ENCODE measurements at regions of chr10 and their contacts with region 1.

Region 1: GRCh38 chr10:58268870-58269605 is at the start of gene CISD1:
- DNase-seq: peak; percentile 96 to 99 (median 97)
- H3K4me3 ChIP-seq: peak within 1 kb of the TSS; percentile 44 to 83 (median 62)
- H3K4me3 Mint-ChIP-seq: peak within 1 kb of the TSS; percentile 93 to 98
- H3K27ac ChIP-seq: peak within 1 kb of the TSS; percentile 84 to 100
- H3K27ac Mint-ChIP-seq: peak within 1 kb of the TSS; percentile 92 to 99 (median 97)
- H3K4me1 ChIP-seq: peaks cover 29 to 42% of the 10 kb centered on the region in 2 donors
- H3K4me1 Mint-ChIP-seq: peaks cover 29% of the 10 kb centered on the region
- H3K27me3 ChIP-seq: no peaks in the 10 kb centered on the region
- H3K27me3 Mint-ChIP-seq: peaks cover 0 to 2% (median 0%) of the 10 kb centered on the region in 3 donors
- CTCF ChIP-seq: no peak
- polyA plus RNA-seq, gene CISD1: 5.4 to 29.4 (median 24.9) TPM

Region 2: DNA sequence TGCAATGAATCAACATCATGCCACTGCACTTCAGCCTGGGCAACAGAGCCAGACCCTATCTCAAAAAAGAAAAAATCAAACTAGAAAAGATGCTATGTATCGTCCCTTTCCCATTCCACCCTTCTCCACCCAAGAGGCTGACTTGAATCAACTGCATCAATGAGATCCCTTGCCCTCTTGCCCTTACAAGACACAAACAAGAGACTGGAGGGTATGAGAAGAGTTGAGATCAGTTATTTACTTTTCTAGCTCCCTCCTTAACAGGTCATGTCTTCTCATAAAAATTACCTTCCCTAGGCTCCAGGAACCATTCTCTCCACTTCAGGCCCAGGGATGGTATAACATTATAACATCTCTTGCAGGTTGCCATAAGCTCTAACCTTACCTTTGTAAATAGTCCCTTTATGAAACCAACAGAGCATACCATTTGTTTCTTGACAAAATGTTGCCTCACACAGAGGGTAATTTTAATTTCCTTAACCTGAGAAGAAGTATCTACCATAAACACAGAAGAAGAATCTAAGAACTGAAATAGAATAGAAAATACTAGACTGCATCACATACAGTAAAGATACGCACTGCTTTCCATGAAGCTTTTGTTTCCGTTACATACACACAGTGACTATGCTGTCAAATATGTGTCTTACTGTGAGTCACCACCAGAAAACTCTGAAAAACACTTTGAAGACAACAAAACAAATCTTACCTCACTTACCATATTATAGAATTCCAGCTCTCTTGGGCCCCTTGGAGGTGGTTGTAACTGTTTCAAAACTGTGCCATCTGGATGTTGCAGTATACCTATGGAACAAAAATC is 31.8 kb before region 1 on chr10:
- intact Hi-C with region 1: no loop called
- DNase-seq: no peak
- H3K4me3 ChIP-seq: no peak overlapping the region
- H3K4me3 Mint-ChIP-seq: no peak overlapping the region
- H3K27ac ChIP-seq: no peak overlapping the region
- H3K27ac Mint-ChIP-seq: peak overlapping the region in 2 of 7 donors; percentile 32 to 38
- H3K4me1 ChIP-seq: no peaks in the 10 kb centered on the region
- H3K4me1 Mint-ChIP-seq: peaks cover 20% of the 10 kb centered on the region
- H3K27me3 ChIP-seq: no peaks in the 10 kb centered on the region
- H3K27me3 Mint-ChIP-seq: no peaks in the 10 kb centered on the region
- CTCF ChIP-seq: no peak

Region 3: GRCh38 chr10:58282615-58283014 is 13.6 kb after region 1 on chr10:
- intact Hi-C with region 1: loop called in 1 of 2 experiments (anchors 2 kb)
- DNase-seq: peak; percentile 83 to 94 (median 85)
- H3K4me3 ChIP-seq: peak overlapping the region in 1 of 3 experiments; percentile 54
- H3K4me3 Mint-ChIP-seq: peak overlapping the region in 1 of 2 donors; percentile 72
- H3K27ac ChIP-seq: peak overlapping the region in 1 of 2 donors; percentile 78
- H3K27ac Mint-ChIP-seq: peak overlapping the region; percentile 81 to 93 (median 88)
- H3K4me1 ChIP-seq: peaks cover 25 to 26% of the 10 kb centered on the region in 2 donors
- H3K4me1 Mint-ChIP-seq: peaks cover 21% of the 10 kb centered on the region
- H3K27me3 ChIP-seq: no peaks in the 10 kb centered on the region
- H3K27me3 Mint-ChIP-seq: peaks cover 0 to 1% (median 0%) of the 10 kb centered on the region in 3 donors
- CTCF ChIP-seq: no peak

Region 4: DNA sequence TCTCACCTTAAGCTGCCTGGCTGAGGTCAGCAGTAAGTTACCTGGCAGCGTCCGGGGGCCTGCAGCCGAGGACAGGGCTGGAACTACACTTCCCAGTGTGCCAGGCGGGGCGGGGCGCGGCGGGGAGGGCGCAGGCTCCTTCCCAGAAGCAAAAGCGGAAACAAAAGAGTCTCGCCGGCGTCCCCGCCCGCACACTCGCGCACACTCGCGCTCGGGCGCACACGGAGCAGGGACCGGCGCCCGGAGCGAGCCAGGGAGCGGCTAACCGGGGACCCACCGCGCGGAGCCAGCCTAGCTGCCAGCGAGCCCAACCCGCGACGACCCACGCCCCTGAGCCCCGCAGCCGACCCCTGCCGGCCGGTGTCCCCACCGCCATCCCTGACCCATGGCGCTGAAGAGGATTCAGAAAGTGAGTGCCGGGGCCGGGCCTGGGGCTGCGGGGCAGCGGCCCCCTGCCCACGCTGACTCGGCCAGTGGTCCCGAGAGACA is 65.8 kb after region 1 on chr10 and contains the start of gene UBE2D1:
- intact Hi-C with region 1: loop called in 1 of 2 experiments (anchors 10 kb)
- DNase-seq: peak; percentile 77 to 85 (median 82)
- H3K4me3 ChIP-seq: peak within 1 kb of the TSS; percentile 65 to 95 (median 93)
- H3K4me3 Mint-ChIP-seq: peak within 1 kb of the TSS; percentile 97 to 100
- H3K27ac ChIP-seq: peak within 1 kb of the TSS; percentile 67 to 91
- H3K27ac Mint-ChIP-seq: peak within 1 kb of the TSS; percentile 90 to 99 (median 95)
- H3K4me1 ChIP-seq: peaks cover 53 to 72% of the 10 kb centered on the region in 2 donors
- H3K4me1 Mint-ChIP-seq: peaks cover 75% of the 10 kb centered on the region
- H3K27me3 ChIP-seq: no peaks in the 10 kb centered on the region
- H3K27me3 Mint-ChIP-seq: no peaks in the 10 kb centered on the region
- CTCF ChIP-seq: no peak
- polyA plus RNA-seq, gene UBE2D1: 47.7 to 119 (median 107) TPM

Region 5: GRCh38 chr10:58384999-58385783 is 116.2 kb after region 1 on chr10 and contains the start of gene TFAM:
- intact Hi-C with region 1: loop called in 1 of 2 experiments (anchors 1 kb)
- DNase-seq: peak; percentile 76 to 92 (median 90)
- H3K4me3 ChIP-seq: peak within 1 kb of the TSS; percentile 68 to 93 (median 77)
- H3K4me3 Mint-ChIP-seq: peak within 1 kb of the TSS; percentile 97 to 99
- H3K27ac ChIP-seq: peak within 1 kb of the TSS; percentile 97
- H3K27ac Mint-ChIP-seq: peak within 1 kb of the TSS; percentile 97 to 99 (median 98)
- H3K4me1 ChIP-seq: peaks cover 32 to 42% of the 10 kb centered on the region in 2 donors
- H3K4me1 Mint-ChIP-seq: peaks cover 43% of the 10 kb centered on the region
- H3K27me3 ChIP-seq: no peaks in the 10 kb centered on the region
- H3K27me3 Mint-ChIP-seq: no peaks in the 10 kb centered on the region
- CTCF ChIP-seq: peak; percentile 46
- polyA plus RNA-seq, gene TFAM: 5.9 to 34.4 (median 33.8) TPM

Region 6: DNA sequence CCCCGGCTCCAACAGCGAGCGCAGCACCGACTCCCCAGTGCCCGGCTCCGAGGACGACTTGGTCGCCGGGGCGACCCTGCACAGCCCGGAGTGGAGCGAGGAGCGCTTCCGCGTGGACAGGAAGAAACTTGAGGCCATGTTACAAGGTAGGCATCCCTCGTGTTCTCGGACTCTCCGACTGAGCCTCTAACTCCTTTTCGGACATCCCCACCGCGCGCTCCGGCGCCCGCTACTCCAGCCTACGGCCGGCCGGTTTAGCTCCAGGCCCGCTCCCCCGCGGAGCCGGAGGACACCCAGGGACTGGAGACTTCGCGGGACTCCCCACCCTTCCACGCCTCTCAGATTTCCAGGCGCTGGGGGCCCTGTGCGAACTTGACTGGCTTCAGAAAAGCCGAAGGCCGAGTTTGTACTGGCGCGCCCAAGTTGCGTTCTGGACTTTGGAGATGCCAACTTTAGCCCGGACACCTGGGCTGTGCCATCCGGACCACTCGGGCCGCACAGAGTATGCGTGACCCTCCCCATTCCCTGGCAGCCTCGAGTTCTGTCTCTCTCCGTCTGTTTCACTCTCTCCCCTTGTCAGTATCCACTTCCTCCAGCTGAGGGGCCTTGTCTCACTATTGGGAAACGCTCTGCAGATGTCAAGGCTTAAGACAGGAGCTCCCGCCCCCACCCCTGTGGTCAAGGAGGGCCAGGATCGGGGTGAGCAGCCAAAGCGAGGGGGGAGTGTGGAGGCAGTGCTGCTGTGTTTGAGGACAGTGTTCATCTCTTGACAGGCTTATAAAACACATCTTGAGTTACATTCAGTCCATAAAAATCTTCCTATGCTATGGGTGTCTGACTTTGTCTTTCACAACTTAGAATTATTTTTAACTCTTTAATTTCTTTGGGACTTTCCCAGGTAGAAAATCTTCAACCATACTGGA is 244.4 kb after region 1 on chr10:
- intact Hi-C with region 1: no loop called
- DNase-seq: peak; percentile 14 to 28 (median 28)
- H3K4me3 ChIP-seq: peak overlapping the region; percentile 56 to 86 (median 76)
- H3K4me3 Mint-ChIP-seq: peak overlapping the region; percentile 84 to 89
- H3K27ac ChIP-seq: no peak overlapping the region
- H3K27ac Mint-ChIP-seq: no peak overlapping the region
- H3K4me1 ChIP-seq: peaks cover 12 to 19% of the 10 kb centered on the region in 2 donors
- H3K4me1 Mint-ChIP-seq: peaks cover 23% of the 10 kb centered on the region
- H3K27me3 ChIP-seq: peaks cover 11 to 58% of the 10 kb centered on the region in 2 donors
- H3K27me3 Mint-ChIP-seq: peaks cover 6 to 19% (median 17%) of the 10 kb centered on the region in 3 donors
- CTCF ChIP-seq: no peak

Region 7: GRCh38 chr10:59906417-59907202 is 1637.6 kb after region 1 on chr10 and contains the start of gene CCDC6:
- intact Hi-C with region 1: loop called in 1 of 2 experiments (anchors 10 kb)
- DNase-seq: peak; percentile 84 to 87 (median 85)
- H3K4me3 ChIP-seq: peak within 1 kb of the TSS; percentile 64 to 95 (median 83)
- H3K4me3 Mint-ChIP-seq: peak within 1 kb of the TSS; percentile 95 to 98
- H3K27ac ChIP-seq: peak within 1 kb of the TSS; percentile 73 to 80
- H3K27ac Mint-ChIP-seq: peak within 1 kb of the TSS; percentile 78 to 94 (median 88)
- H3K4me1 ChIP-seq: peaks cover 43 to 48% of the 10 kb centered on the region in 2 donors
- H3K4me1 Mint-ChIP-seq: peaks cover 51% of the 10 kb centered on the region
- H3K27me3 ChIP-seq: no peaks in the 10 kb centered on the region
- H3K27me3 Mint-ChIP-seq: peaks cover 0 to 2% (median 2%) of the 10 kb centered on the region in 3 donors
- CTCF ChIP-seq: peak; percentile 90
- polyA plus RNA-seq, gene CCDC6: 4.2 to 13.5 (median 6.2) TPM

Measured in CD14-positive monocyte (primary cell).